ENCODE measurements at regions of chr15 and their contacts with region 1.

Region 1: DNA sequence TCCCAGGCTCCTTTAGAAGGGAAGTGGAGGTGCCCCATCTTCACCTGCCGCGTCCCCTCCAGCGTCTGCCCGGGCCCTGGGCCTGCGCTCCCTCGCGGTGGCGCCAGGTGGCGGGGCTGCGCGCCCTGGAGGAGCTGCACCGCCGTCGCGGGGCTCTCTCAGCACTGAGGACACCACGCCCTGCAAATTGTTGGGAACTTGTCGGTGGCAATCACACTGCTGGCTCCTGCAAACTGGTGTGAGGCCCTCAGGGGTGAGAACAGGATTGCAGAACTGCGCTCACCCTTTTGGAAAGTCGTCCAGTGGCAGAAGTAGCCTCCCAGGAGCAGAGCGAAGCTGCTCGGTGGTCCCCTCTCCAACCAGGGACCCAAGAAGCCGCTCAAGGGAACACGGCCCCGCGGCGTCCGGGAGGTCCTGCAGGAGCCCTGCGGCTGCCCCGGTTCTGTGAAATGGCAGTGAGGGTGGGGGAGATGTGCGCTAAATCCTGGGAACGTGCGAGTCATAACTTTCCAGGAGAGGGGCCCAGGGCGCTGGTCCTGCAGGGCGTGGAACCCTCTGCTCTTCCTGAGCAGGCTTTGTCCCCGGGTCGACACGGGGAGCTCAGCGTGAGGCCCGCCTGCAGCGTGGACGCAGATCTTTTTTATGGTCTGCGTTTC is 995 bp upstream of the LRRK1 start:
- DNase-seq: peak; percentile 66 to 80
- ATAC-seq: peak; percentile 90 to 97 (median 94)
- H3K4me3 ChIP-seq: peak overlapping the region; percentile 58 to 73 (median 66)
- H3K27ac ChIP-seq: peak overlapping the region in 7 of 10 donors; percentile 44 to 83 (median 74)
- H3K4me1 ChIP-seq: peaks cover 0 to 52% (median 16%) of the 10 kb centered on the region in 9 donors
- H3K27me3 ChIP-seq: peaks cover 0 to 45% (median 20%) of the 10 kb centered on the region in 7 donors
- CTCF ChIP-seq: peak; percentile 77 to 96 (median 92)

Region 2: DNA sequence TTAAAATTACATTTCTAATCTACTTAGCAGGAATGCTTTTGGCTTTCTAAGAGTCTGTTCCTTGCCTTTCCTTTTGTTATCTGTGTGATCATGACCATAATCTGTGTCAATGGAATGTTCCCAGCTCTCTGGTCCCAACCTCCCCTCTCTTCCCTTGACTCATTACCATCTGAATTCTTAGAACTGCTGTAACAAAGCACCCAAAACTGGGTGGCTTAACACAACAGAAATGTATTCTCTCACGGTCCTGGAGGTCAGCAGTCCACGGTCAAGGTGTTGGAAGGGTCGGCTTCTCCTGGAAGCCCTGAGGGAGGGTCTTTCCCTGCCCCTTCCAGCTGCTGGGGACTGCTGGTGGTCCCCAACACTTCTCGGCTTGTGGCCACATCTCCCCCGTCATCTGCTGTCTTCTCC is 82.1 kb after region 1 on chr15:
- intact Hi-C with region 1: loop called in 3 of 10 experiments (anchors 5 kb)
- DNase-seq: no peak
- ATAC-seq: no peak
- H3K4me3 ChIP-seq: no peak overlapping the region
- H3K27ac ChIP-seq: no peak overlapping the region
- H3K4me1 ChIP-seq: peaks cover 0 to 6% (median 0%) of the 10 kb centered on the region in 9 donors
- H3K27me3 ChIP-seq: peaks cover 0 to 2% (median 0%) of the 10 kb centered on the region in 7 donors
- CTCF ChIP-seq: no peak

Region 3: DNA sequence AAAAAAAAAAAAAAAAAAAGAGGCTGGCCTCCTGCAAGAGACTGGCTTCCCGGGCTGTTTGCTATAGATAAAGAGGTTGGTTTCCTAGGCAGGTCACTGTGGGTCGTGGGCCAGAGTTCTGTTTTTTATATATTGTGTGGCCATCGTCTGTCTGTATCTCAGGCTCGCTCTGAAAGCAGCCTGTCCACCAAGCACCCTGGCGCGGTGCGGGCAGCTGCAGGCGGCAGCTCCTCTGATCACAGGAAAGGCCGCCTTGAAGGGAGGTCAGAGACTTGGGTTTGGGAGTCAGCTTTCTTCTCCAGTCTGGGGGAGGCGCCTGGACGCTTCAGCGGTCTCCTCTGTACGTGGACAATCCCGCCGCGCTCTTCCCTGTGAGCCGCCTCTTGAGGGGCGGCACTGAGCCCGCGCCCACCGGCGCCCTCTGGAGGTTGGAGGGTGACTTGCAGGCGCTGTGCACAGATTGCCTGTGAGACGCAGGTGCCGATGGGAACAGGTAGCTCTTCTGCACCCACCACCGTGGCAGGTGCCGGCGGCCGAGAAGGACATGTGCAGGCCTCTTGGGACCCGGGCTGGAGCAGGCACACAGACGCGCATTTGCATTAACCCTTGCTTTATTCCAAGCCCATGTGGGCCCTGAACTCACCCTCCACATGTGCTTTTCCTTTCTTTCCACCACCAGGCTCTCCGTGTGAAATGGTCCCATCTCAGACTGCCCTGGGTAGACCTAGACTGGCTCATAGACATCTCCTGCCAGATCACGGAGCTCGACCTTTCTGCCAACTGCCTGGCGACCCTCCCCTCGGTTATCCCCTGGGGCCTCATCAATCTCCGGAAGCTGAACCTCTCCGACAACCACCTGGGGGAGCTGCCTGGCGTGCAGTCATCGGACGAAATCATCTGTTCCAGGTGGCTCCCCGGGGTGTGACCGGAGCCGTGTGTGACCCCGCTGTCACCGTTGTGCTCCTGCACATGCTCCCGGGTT is 90.3 kb after region 1 on chr15:
- intact Hi-C with region 1: loop called (anchors 1 to 5 kb)
- DNase-seq: peak; percentile 77 to 85
- ATAC-seq: peak; percentile 83 to 89 (median 86)
- H3K4me3 ChIP-seq: peak overlapping the region; percentile 23 to 62 (median 54)
- H3K27ac ChIP-seq: peak overlapping the region in 2 of 10 donors; percentile 31 to 48
- H3K4me1 ChIP-seq: peaks cover 2 to 23% (median 17%) of the 10 kb centered on the region in 9 donors
- H3K27me3 ChIP-seq: no peaks in the 10 kb centered on the region
- CTCF ChIP-seq: peak; percentile 95 to 99 (median 98)

Region 4: GRCh38 chr15:101269479-101270223 is 351.5 kb after region 1 on chr15:
- intact Hi-C with region 1: loop called in 2 of 10 experiments (anchors 10 kb)
- DNase-seq: peak; percentile 41 to 43
- ATAC-seq: peak in 7 of 8 donors; percentile 42 to 74 (median 65)
- H3K4me3 ChIP-seq: no peak overlapping the region
- H3K27ac ChIP-seq: peak overlapping the region in 3 of 10 donors; percentile 11 to 51 (median 16)
- H3K4me1 ChIP-seq: peaks cover 0 to 43% (median 16%) of the 10 kb centered on the region in 9 donors
- H3K27me3 ChIP-seq: no peaks in the 10 kb centered on the region
- CTCF ChIP-seq: peak in 8 of 9 donors; percentile 12 to 62 (median 40)